Ascending aorta (tissue), 2 donors: ENCODE measurements at regions of chr2 and their contacts with region 1.

Region 1: GRCh38 chr2:19347619-19348562 is 10.5 kb downstream of the OSR1 start:
- DNase-seq: peak; percentile 97 to 99
- H3K4me3 ChIP-seq: peak overlapping the region; percentile 81 to 87
- H3K27ac ChIP-seq: peak overlapping the region; percentile 96
- H3K4me1 ChIP-seq: peaks cover 13 to 44% of the 10 kb centered on the region in 2 donors
- H3K27me3 ChIP-seq: no peaks in the 10 kb centered on the region
- CTCF ChIP-seq: no peak

Region 2: GRCh38 chr2:18387441-18388206 is 960.3 kb before region 1 on chr2:
- intact Hi-C with region 1: loop called (anchors 5 kb)
- DNase-seq: peak in 1 of 2 donors; percentile 92
- H3K4me3 ChIP-seq: no peak overlapping the region
- H3K27ac ChIP-seq: peak overlapping the region; percentile 44 to 46
- H3K4me1 ChIP-seq: peaks cover 0 to 3% of the 10 kb centered on the region in 2 donors
- H3K27me3 ChIP-seq: no peaks in the 10 kb centered on the region
- CTCF ChIP-seq: peak; percentile 66 to 90 (median 89)

Region 3: GRCh38 chr2:18560031-18560796 is 787.7 kb before region 1 on chr2 and contains the start of gene RDH14:
- intact Hi-C with region 1: loop called (anchors 2 kb)
- DNase-seq: peak; percentile 87 to 98
- H3K4me3 ChIP-seq: peak within 1 kb of the TSS; percentile 78 to 90
- H3K27ac ChIP-seq: peak within 1 kb of the TSS; percentile 93 to 95
- H3K4me1 ChIP-seq: peaks cover 5 to 25% of the 10 kb centered on the region in 2 donors
- H3K27me3 ChIP-seq: no peaks in the 10 kb centered on the region
- CTCF ChIP-seq: no peak
- total RNA-seq, gene RDH14: 51.2 TPM

Region 4: GRCh38 chr2:19362755-19363473 is 15.0 kb after region 1 on chr2:
- intact Hi-C with region 1: loop called (anchors 1 kb)
- DNase-seq: peak in 1 of 2 donors; percentile 87
- H3K4me3 ChIP-seq: peak overlapping the region; percentile 73 to 91
- H3K27ac ChIP-seq: peak overlapping the region; percentile 51 to 96
- H3K4me1 ChIP-seq: peaks cover 11 to 14% of the 10 kb centered on the region in 2 donors
- H3K27me3 ChIP-seq: no peaks in the 10 kb centered on the region
- CTCF ChIP-seq: peak; percentile 67 to 72 (median 68)

Region 5: DNA sequence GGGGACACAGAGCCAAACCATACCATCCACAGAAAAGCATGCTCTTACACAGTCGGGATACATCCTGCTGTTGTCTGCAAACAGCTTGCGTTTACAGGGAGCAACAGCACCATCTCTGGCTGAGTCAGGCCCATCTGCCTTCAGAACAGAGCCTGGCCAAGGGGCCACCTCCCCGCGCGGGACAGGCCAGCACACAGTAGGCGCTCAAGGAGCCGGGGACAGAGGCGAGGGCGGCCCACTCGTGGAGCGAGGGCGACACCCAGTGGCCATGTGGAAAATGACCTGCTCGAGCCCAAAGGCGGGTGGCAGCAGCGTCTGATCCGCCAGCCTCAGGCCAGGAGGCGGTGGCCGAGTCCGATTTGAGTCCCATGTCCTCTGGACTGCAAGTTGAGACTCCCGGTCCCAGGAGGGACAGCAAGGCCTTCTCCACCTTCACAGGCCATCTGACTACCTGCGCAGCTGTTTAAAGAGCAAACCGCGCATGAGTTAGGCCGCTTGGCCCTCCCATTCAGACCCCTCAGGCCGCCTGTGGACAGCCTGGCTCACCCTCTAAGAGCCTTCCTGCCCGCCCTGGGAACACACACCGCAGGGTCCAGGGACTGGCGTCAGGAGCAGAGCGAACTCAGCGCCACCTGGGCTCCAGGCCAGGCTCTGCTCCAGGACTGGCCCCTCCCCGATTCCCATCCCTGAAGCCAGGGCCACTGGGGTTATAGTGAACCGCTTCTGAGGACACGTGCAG is 515.6 kb after region 1 on chr2:
- intact Hi-C with region 1: loop called (anchors 1 kb)
- DNase-seq: peak in 1 of 2 donors; percentile 89
- H3K4me3 ChIP-seq: peak overlapping the region in 1 of 2 donors; percentile 50
- H3K27ac ChIP-seq: peak overlapping the region; percentile 89 to 91
- H3K4me1 ChIP-seq: peaks cover 14 to 42% of the 10 kb centered on the region in 2 donors
- H3K27me3 ChIP-seq: no peaks in the 10 kb centered on the region
- CTCF ChIP-seq: peak; percentile 97 to 98 (median 97)

Region 6: DNA sequence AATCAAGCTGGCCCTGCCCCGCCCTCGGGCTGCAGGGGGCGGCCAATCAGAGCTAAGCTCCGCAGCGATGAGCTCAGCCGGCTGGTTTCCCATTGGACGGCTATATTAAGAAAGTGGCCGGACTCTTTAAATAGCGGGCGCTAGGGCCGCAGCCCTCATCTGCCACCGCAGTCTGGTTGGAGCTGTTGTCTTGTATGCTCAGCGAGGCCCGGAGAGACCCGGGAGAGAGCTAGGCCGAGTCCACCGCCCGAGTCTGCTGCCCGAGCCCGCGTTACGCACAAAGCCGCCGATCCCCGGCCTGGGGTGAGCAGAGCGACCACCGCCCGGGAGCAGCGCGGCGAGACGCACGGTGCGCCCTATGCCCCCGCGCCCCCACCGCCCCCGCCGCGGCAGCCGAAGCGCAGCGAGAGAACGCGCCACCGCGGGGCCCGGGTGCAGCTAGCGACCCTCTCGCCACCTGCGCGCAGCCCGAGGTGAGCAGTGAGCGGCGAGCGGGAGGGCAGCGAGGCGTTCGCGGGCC is 1099.1 kb after region 1 on chr2 and contains the start of gene RHOB:
- intact Hi-C with region 1: loop called (anchors 10 kb)
- DNase-seq: peak; percentile 91 to 99
- H3K4me3 ChIP-seq: peak within 1 kb of the TSS; percentile 80 to 95
- H3K27ac ChIP-seq: peak within 1 kb of the TSS; percentile 90 to 96
- H3K4me1 ChIP-seq: peaks cover 3 to 12% of the 10 kb centered on the region in 2 donors
- H3K27me3 ChIP-seq: no peaks in the 10 kb centered on the region
- CTCF ChIP-seq: no peak
- total RNA-seq, gene RHOB: 3,143 TPM